ENCODE measurements at regions of chr12 and their contacts with region 1.

Region 1: DNA sequence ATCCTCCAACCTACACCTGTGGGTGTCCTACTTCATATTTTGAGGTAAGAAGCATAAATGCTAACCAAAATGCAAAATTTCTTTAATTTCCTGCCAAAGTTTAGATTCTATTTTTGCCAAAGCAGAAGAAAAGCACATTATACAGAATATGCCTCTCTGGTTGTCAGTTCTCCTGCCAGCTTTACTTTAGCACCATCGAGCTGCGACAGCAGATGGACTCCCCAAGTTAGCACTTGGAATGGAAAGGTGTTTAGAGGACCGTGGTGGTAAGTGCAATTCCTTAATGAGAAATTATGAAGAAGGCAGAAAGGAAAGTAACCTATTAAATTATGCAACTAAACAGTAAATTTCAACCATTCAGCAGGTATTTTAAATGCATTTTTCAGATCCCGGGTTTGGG is 326.6 kb downstream of the RERGL start:
- DNase-seq: no peak
- H3K4me3 ChIP-seq: no peak overlapping the region
- H3K27ac ChIP-seq: no peak overlapping the region
- H3K4me1 ChIP-seq: no peaks in the 10 kb centered on the region
- H3K27me3 ChIP-seq: no peaks in the 10 kb centered on the region
- CTCF ChIP-seq: no peak
- EP300 ChIP-seq: no peak
- POLR2A ChIP-seq: no peak

Region 2: DNA sequence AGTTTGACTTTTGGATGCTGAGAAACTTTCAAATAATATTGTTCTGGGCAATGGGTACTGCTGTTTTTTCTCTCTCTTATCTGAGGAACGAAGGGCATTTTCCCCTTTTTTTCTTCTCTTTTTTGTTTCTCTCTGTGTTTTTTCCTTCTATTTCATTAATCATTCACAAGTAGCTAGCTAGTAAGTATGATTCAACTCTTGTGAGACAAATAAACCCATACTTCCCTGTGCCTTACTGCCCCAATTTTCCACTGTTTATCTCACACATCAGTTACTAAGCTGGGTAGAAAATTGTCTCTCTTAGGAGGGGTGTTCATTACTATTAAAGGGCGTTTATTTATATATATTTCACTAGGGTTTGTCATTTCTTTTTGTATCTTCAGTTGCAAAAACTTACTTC is 110.9 kb before region 1 on chr12:
- intact Hi-C with region 1: no loop called
- DNase-seq: no peak
- H3K4me3 ChIP-seq: no peak overlapping the region
- H3K27ac ChIP-seq: no peak overlapping the region
- H3K4me1 ChIP-seq: no peaks in the 10 kb centered on the region
- H3K27me3 ChIP-seq: no peaks in the 10 kb centered on the region
- CTCF ChIP-seq: no peak
- EP300 ChIP-seq: no peak
- POLR2A ChIP-seq: no peak

Region 3: DNA sequence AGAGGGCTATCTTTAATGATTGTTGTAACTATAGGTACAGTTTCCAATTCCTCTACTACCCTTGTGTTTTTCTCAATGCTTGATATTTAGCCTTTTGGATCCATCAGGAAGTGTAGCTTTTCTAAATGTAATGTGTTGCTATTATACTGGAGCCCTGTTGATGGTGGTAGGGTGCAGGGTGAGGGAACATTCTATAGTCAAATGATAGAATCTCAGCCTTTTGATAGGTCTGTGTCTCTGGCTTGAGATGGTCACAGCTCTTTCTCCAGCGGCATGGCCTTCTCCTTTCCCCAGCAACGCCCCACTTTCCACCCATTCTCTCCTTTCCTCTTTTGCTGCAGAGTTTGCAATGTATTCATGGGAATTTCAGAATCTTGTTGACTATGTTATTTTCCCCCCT is 72.0 kb before region 1 on chr12:
- intact Hi-C with region 1: no loop called
- DNase-seq: no peak
- H3K4me3 ChIP-seq: no peak overlapping the region
- H3K27ac ChIP-seq: no peak overlapping the region
- H3K4me1 ChIP-seq: no peaks in the 10 kb centered on the region
- H3K27me3 ChIP-seq: no peaks in the 10 kb centered on the region
- CTCF ChIP-seq: no peak
- EP300 ChIP-seq: no peak
- POLR2A ChIP-seq: no peak

Region 4: GRCh38 chr12:17829813-17830212 is 66.4 kb after region 1 on chr12:
- intact Hi-C with region 1: no loop called
- DNase-seq: no peak
- H3K4me3 ChIP-seq: no peak overlapping the region
- H3K27ac ChIP-seq: no peak overlapping the region
- H3K4me1 ChIP-seq: no peaks in the 10 kb centered on the region
- H3K27me3 ChIP-seq: no peaks in the 10 kb centered on the region
- CTCF ChIP-seq: no peak
- EP300 ChIP-seq: no peak
- POLR2A ChIP-seq: no peak

Region 5: DNA sequence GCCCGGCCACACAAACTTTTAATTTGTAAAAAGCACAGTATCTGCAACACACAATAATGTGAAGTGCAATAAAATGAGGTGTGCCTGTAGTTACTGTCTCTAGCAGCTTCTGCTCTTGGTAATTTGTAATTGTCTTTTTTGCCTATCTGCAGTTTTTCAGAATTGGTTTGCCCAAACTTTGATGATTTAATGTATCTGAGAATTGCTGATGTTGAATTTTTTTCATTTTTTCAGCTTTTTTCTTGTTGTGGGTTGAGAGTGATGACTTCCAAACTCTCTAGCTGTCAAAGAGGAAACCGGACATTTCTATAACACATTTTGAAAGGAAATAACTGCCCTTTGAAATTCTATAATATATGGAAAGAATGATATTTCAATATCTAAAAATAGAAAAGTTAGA is 89.7 kb after region 1 on chr12:
- intact Hi-C with region 1: loop called (anchors 5 kb)
- DNase-seq: no peak
- H3K4me3 ChIP-seq: no peak overlapping the region
- H3K27ac ChIP-seq: no peak overlapping the region
- H3K4me1 ChIP-seq: no peaks in the 10 kb centered on the region
- H3K27me3 ChIP-seq: no peaks in the 10 kb centered on the region
- CTCF ChIP-seq: no peak
- EP300 ChIP-seq: no peak
- POLR2A ChIP-seq: no peak